B cell (primary cell): ENCODE measurements at regions of chr15 and their contacts with region 1.

Region 1: DNA sequence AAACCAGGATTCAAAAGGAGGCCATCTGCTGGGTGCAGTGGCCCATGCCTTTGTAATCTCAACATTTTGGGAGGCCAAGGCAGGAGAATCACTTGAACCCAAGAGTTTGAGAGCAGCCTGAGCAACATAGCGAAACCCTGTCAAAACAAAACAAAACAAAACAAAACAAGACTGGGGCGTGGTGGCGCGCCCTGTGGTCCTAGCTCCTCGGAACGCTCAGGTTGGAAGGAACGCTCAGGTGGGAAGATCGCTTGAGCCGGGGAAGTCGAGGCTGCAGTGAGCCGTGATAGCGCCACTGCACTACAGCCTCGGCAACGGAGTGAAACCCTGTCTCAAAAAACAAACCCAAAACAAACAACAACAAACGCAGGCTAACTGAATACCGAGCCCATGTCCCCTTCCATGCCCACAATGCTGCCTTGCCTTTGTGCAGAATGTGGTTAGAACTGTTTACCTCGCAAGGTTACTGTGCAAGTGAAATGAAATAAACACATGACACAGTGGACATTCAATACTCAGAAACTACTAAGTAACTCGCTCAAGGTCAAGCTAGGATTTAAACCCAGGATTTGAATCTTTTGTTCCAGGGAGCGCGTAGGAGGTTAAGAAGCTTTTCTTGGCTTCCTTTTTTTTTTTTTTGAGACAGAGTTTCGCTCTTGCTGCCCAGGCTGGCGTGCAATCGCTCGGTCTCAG is 766 bp upstream of the EMC4 start:
- DNase-seq: no peak
- ATAC-seq: no peak
- H3K4me3 ChIP-seq: peak overlapping the region; percentile 77 to 98 (median 82)
- H3K4me3 Mint-ChIP-seq: peak overlapping the region; percentile 94
- H3K27ac ChIP-seq: peak overlapping the region; percentile 77 to 90
- H3K27ac Mint-ChIP-seq: peak overlapping the region; percentile 98
- H3K4me1 ChIP-seq: peaks cover 8 to 16% of the 10 kb centered on the region in 2 donors
- H3K4me1 Mint-ChIP-seq: peaks cover 26% of the 10 kb centered on the region
- H3K27me3 ChIP-seq: no peaks in the 10 kb centered on the region
- H3K27me3 Mint-ChIP-seq: no peaks in the 10 kb centered on the region
- CTCF ChIP-seq: no peak

Region 2: GRCh38 chr15:34101366-34102175 is 122.5 kb before region 1 on chr15 and contains the starts of genes EMC7 and PGBD4:
- CTCF ChIA-PET with region 1: no interaction called
- POLR2A ChIA-PET with region 1: interaction called, 4 read pairs
- intact Hi-C with region 1: loop called (anchors 1 kb)
- DNase-seq: peak; percentile 99
- ATAC-seq: peak; percentile 99
- H3K4me3 ChIP-seq: peak within 1 kb of the TSS; percentile 80 to 99 (median 82)
- H3K4me3 Mint-ChIP-seq: peak within 1 kb of the TSS; percentile 98
- H3K27ac ChIP-seq: peak within 1 kb of the TSS; percentile 92 to 98
- H3K27ac Mint-ChIP-seq: peak within 1 kb of the TSS; percentile 99
- H3K4me1 ChIP-seq: peaks cover 18 to 19% of the 10 kb centered on the region in 2 donors
- H3K4me1 Mint-ChIP-seq: peaks cover 41% of the 10 kb centered on the region
- H3K27me3 ChIP-seq: no peaks in the 10 kb centered on the region
- H3K27me3 Mint-ChIP-seq: no peaks in the 10 kb centered on the region
- CTCF ChIP-seq: no peak
- total RNA-seq, gene EMC7: 28.8 and 29.9 TPM in 2 replicates
- total RNA-seq, gene PGBD4: 5.2 and 5.6 TPM in 2 replicates